ENCODE measurements at regions of chr20 and their contacts with region 1.

Region 1: DNA sequence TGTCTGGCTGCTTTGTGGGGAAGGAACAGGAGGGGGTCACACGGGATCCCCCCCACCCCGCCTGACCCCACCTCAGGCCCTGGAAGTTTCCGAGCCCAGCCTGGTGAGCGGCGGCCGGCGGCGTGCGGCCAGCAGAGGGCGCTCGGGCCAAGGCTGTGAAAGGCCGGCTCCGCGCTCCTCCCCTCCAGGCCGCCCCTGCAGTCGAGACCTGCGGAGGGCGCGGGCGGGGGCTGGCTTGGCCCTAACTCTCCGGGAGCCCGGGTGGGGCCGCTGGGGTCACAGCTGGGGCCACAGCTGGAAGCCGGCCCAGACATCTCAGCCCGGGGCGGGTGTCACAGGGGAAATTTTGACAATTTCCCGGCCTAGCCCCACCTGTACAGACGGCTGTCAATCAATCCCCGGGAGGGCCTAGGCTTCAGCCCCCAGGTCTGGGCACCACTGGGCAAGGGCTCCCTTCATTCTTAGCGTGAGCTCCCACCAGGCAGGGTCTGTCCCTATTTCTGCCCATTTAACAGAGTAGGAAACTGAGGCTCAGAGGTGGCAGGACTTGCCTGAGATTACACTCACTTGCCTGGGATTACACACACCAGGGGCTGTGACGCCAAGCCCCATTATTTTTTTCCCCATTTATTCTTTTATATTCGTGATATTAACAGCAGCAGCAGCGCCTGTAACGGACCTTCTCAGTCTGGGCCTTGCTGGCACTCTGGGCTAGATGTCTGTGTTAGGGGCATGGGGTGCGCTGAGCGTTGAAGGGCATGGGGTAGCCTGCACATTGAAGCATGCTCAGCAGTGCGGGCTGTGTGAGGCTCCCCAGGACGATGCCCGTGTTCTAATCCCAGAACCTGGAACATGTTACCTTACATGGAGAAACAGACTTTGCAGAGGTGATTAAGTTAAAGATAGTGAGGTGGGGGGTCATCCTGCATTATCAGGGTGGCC is 23.0 kb downstream of the ZBP1 start:
- DNase-seq: peak; percentile 59 to 86 (median 76)
- ATAC-seq: peak; percentile 89
- H3K4me3 ChIP-seq: no peak overlapping the region
- H3K4me3 Mint-ChIP-seq: peak overlapping the region in 4 of 10 donors; percentile 13 to 49 (median 20)
- H3K27ac ChIP-seq: no peak overlapping the region
- H3K27ac Mint-ChIP-seq: peak overlapping the region in 1 of 9 donors; percentile 78
- H3K4me1 ChIP-seq: peaks cover 3 to 4% of the 10 kb centered on the region in 2 donors
- H3K4me1 Mint-ChIP-seq: peaks cover 0 to 13% (median 4%) of the 10 kb centered on the region in 7 donors
- H3K27me3 ChIP-seq: no peaks in the 10 kb centered on the region
- H3K27me3 Mint-ChIP-seq: peaks cover 0 to 37% (median 0%) of the 10 kb centered on the region in 5 donors

Region 2: DNA sequence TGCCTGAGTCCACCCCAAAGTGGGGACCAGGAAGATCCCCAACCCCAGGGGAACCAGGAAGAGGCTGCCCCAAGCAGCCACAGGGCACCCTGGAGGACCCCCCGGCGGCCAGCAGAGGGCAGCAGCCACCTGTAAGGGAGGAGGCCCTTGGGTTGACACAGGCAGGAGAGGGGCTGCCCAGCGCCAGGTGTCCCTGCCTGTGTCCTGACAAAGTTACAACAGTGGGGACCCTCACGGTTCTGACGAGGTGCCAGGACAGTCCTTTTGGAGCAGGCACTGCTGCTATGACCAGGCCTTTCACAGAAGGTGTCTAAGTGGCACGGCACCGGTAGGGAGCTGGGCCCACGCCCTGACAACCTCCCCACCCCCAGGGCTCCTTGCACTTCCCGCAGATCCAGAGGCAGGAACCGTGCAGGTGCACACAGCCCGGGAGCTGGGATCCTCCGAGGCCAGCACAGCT is 507.5 kb before region 1 on chr20:
- CTCF ChIA-PET with region 1: no interaction called
- POLR2A ChIA-PET with region 1: no interaction called
- intact Hi-C with region 1: loop called in 1 of 2 experiments (anchors 10 kb)
- DNase-seq: peak; percentile 7 to 69 (median 39)
- ATAC-seq: peak; percentile 64
- H3K4me3 ChIP-seq: no peak overlapping the region
- H3K4me3 Mint-ChIP-seq: no peak overlapping the region
- H3K27ac ChIP-seq: no peak overlapping the region
- H3K27ac Mint-ChIP-seq: no peak overlapping the region
- H3K4me1 ChIP-seq: no peaks in the 10 kb centered on the region
- H3K4me1 Mint-ChIP-seq: peaks cover 4 to 28% (median 13%) of the 10 kb centered on the region in 7 donors
- H3K27me3 ChIP-seq: no peaks in the 10 kb centered on the region
- H3K27me3 Mint-ChIP-seq: peaks cover 0 to 23% (median 13%) of the 10 kb centered on the region in 5 donors

Region 3: GRCh38 chr20:57195469-57196100 is 401.7 kb before region 1 on chr20:
- CTCF ChIA-PET with region 1: no interaction called
- POLR2A ChIA-PET with region 1: no interaction called
- intact Hi-C with region 1: no loop called
- DNase-seq: no peak
- ATAC-seq: no peak
- H3K4me3 ChIP-seq: no peak overlapping the region
- H3K4me3 Mint-ChIP-seq: no peak overlapping the region
- H3K27ac ChIP-seq: no peak overlapping the region
- H3K27ac Mint-ChIP-seq: no peak overlapping the region
- H3K4me1 ChIP-seq: no peaks in the 10 kb centered on the region
- H3K4me1 Mint-ChIP-seq: no peaks in the 10 kb centered on the region
- H3K27me3 ChIP-seq: no peaks in the 10 kb centered on the region
- H3K27me3 Mint-ChIP-seq: peaks cover 0 to 34% (median 10%) of the 10 kb centered on the region in 5 donors

Region 4: GRCh38 chr20:57498425-57499400 is 98.6 kb before region 1 on chr20:
- CTCF ChIA-PET with region 1: interaction called, 6 read pairs
- POLR2A ChIA-PET with region 1: no interaction called
- intact Hi-C with region 1: loop called (anchors 1 to 2 kb)
- DNase-seq: peak in 5 of 9 donors; percentile 19 to 43 (median 24)
- ATAC-seq: peak; percentile 78
- H3K4me3 ChIP-seq: no peak overlapping the region
- H3K4me3 Mint-ChIP-seq: peak overlapping the region in 5 of 10 donors; percentile 3 to 33 (median 20)
- H3K27ac ChIP-seq: no peak overlapping the region
- H3K27ac Mint-ChIP-seq: peak overlapping the region in 2 of 9 donors; percentile 55 to 60
- H3K4me1 ChIP-seq: peaks cover 6 to 11% of the 10 kb centered on the region in 2 donors
- H3K4me1 Mint-ChIP-seq: peaks cover 12 to 15% (median 13%) of the 10 kb centered on the region in 7 donors
- H3K27me3 ChIP-seq: peaks cover 0 to 5% of the 10 kb centered on the region in 2 donors
- H3K27me3 Mint-ChIP-seq: peaks cover 11 to 72% (median 30%) of the 10 kb centered on the region in 5 donors

Region 5: GRCh38 chr20:57546956-57547649 is 50.2 kb before region 1 on chr20:
- CTCF ChIA-PET with region 1: no interaction called
- POLR2A ChIA-PET with region 1: no interaction called
- intact Hi-C with region 1: no loop called
- DNase-seq: no peak
- ATAC-seq: no peak
- H3K4me3 ChIP-seq: no peak overlapping the region
- H3K4me3 Mint-ChIP-seq: no peak overlapping the region
- H3K27ac ChIP-seq: no peak overlapping the region
- H3K27ac Mint-ChIP-seq: no peak overlapping the region
- H3K4me1 ChIP-seq: no peaks in the 10 kb centered on the region
- H3K4me1 Mint-ChIP-seq: peaks cover 0 to 5% (median 0%) of the 10 kb centered on the region in 7 donors
- H3K27me3 ChIP-seq: no peaks in the 10 kb centered on the region
- H3K27me3 Mint-ChIP-seq: peaks cover 0 to 19% (median 5%) of the 10 kb centered on the region in 5 donors

Region 6: DNA sequence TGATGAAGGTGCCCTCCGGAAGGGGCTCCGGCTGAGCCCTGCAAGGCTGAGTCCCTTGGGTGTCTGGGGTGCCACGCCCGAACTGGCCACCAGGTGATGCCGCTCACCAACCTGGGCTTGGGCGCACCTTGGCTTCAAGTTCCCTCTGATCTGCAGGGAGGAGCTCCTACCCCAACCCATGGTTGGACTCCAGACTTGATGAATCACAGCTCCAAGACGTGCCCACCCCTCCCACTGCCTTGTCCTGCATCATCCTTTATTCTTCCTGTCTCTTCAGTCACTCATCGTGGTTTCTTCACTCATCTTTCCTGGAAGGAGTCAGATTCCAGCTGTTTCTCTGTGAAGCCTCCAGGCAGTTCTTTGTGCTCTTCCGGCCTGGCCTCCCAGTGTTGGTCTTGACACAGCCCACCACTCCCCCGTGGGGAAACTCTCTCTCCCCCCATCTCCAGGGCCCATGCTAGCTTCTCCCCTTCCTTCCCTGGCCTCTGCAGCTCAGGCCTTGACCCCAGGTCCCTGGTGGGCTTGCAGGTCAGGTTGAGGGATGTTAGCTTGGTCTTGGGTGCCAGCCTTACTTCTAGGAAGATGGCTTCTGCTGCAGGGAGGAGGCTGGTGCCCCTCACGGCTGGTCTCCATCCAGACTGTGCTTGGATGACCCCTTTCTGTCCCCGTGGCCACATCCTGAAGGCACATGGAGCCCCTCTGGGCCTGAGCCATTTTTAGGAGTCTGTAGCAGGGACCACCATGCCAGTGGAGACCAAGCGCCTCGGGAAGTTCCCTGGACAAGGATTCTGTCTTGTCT is 25.5 kb after region 1 on chr20:
- CTCF ChIA-PET with region 1: interaction called, 7 read pairs
- POLR2A ChIA-PET with region 1: interaction called, 5 read pairs
- intact Hi-C with region 1: loop called (anchors 1 to 2 kb)
- DNase-seq: peak in 8 of 9 donors; percentile 45 to 71 (median 66)
- ATAC-seq: peak; percentile 41
- H3K4me3 ChIP-seq: no peak overlapping the region
- H3K4me3 Mint-ChIP-seq: peak overlapping the region; percentile 10 to 89 (median 56)
- H3K27ac ChIP-seq: no peak overlapping the region
- H3K27ac Mint-ChIP-seq: peak overlapping the region; percentile 67 to 93 (median 84)
- H3K4me1 ChIP-seq: peaks cover 50 to 75% of the 10 kb centered on the region in 2 donors
- H3K4me1 Mint-ChIP-seq: peaks cover 48 to 98% (median 78%) of the 10 kb centered on the region in 7 donors
- H3K27me3 ChIP-seq: no peaks in the 10 kb centered on the region
- H3K27me3 Mint-ChIP-seq: peaks cover 0 to 20% (median 0%) of the 10 kb centered on the region in 5 donors

Region 7: GRCh38 chr20:57680131-57680716 is 83.0 kb after region 1 on chr20:
- CTCF ChIA-PET with region 1: interaction called, 36 read pairs
- POLR2A ChIA-PET with region 1: no interaction called
- intact Hi-C with region 1: loop called in 1 of 2 experiments (anchors 1 kb)
- DNase-seq: no peak
- ATAC-seq: peak; percentile 46
- H3K4me3 ChIP-seq: no peak overlapping the region
- H3K4me3 Mint-ChIP-seq: peak overlapping the region in 3 of 10 donors; percentile 26 to 48 (median 43)
- H3K27ac ChIP-seq: no peak overlapping the region
- H3K27ac Mint-ChIP-seq: peak overlapping the region in 1 of 9 donors; percentile 14
- H3K4me1 ChIP-seq: peaks cover 0 to 15% of the 10 kb centered on the region in 2 donors
- H3K4me1 Mint-ChIP-seq: peaks cover 0 to 49% (median 32%) of the 10 kb centered on the region in 7 donors
- H3K27me3 ChIP-seq: no peaks in the 10 kb centered on the region
- H3K27me3 Mint-ChIP-seq: peaks cover 0 to 11% (median 0%) of the 10 kb centered on the region in 5 donors

Region 8: GRCh38 chr20:58001381-58001780 is 404.1 kb after region 1 on chr20:
- CTCF ChIA-PET with region 1: no interaction called
- POLR2A ChIA-PET with region 1: no interaction called
- intact Hi-C with region 1: no loop called
- DNase-seq: no peak
- ATAC-seq: no peak
- H3K4me3 ChIP-seq: no peak overlapping the region
- H3K4me3 Mint-ChIP-seq: no peak overlapping the region
- H3K27ac ChIP-seq: no peak overlapping the region
- H3K27ac Mint-ChIP-seq: peak overlapping the region in 1 of 9 donors; percentile 19
- H3K4me1 ChIP-seq: no peaks in the 10 kb centered on the region
- H3K4me1 Mint-ChIP-seq: peaks cover 0 to 13% (median 4%) of the 10 kb centered on the region in 7 donors
- H3K27me3 ChIP-seq: no peaks in the 10 kb centered on the region
- H3K27me3 Mint-ChIP-seq: peaks cover 8 to 30% (median 24%) of the 10 kb centered on the region in 5 donors

Region 9: DNA sequence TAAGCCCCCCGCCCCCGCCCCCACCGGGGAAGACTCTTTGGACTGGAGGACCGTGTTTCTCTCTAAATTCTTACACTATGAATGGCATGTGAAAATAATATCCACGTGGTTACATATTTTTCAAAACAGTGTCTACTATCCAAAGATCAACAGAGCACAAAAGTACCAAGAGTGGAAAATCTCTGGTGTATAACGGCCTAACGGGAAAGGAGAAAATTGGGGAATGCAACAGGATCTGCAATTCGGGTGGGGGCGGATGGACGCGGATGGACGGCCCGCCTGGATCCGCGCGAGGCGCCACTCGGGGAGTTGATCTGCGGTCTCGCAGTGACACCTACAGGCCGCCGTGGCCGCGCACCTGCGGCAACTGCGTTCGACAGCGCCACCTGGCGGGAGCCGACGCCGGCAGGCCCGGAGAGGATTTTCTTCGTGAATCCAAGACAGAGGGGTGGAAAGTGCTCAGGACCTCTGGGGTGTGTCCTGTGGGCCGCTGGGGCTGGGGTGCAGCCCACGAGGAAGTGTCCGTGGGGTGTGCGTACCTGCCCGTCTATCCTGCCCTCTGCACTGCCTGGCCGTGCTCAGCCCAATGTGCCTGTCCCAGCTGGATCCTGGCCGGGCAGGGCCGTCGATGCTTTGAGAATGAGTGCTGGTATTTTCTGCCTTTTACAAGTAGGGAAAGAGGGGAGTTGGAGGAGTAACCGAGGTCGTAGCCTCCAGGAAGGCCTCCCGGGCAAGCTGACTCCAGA is 612.6 kb after region 1 on chr20:
- CTCF ChIA-PET with region 1: interaction called, 6 read pairs
- POLR2A ChIA-PET with region 1: no interaction called
- intact Hi-C with region 1: loop called (anchors 1 kb)
- DNase-seq: peak; percentile 73 to 93 (median 85)
- ATAC-seq: peak; percentile 96
- H3K4me3 ChIP-seq: no peak overlapping the region
- H3K4me3 Mint-ChIP-seq: peak overlapping the region in 5 of 10 donors; percentile 3 to 62 (median 32)
- H3K27ac ChIP-seq: peak overlapping the region; percentile 39
- H3K27ac Mint-ChIP-seq: peak overlapping the region in 8 of 9 donors; percentile 7 to 83 (median 72)
- H3K4me1 ChIP-seq: peaks cover 0 to 3% of the 10 kb centered on the region in 2 donors
- H3K4me1 Mint-ChIP-seq: peaks cover 0 to 8% (median 0%) of the 10 kb centered on the region in 7 donors
- H3K27me3 ChIP-seq: no peaks in the 10 kb centered on the region
- H3K27me3 Mint-ChIP-seq: peaks cover 0 to 20% (median 4%) of the 10 kb centered on the region in 5 donors

Measured in naive thymus-derived CD4-positive, alpha-beta T cell (primary cell).